SK-N-SH (cell line): ENCODE measurements at regions of chr1 and their contacts with region 1.

Region 1: GRCh38 chr1:6052543-6053205 is 7.0 kb downstream of the KCNAB2 start:
- DNase-seq: peak; percentile 86
- H3K4me3 ChIP-seq: peak overlapping the region in 1 of 2 experiments; percentile 36; a peak in 1 of 4 replicates
- H3K27ac ChIP-seq: no peak overlapping the region
- H3K4me1 ChIP-seq: peaks cover 0 to 38% of the 10 kb centered on the region in 2 experiments; a peak in 1 of 4 replicates
- H3K27me3 ChIP-seq: no peaks in the 10 kb centered on the region
- CTCF ChIP-seq: peak; percentile 62
- EP300 ChIP-seq: 0 out of 4 replicates have a peak, but pooled peaks of 1 of the 2 experiments have one; percentile 7
- RAD21 ChIP-seq: peak; percentile 94

Region 2: GRCh38 chr1:6041432-6042062 is 11.1 kb before region 1 on chr1:
- CTCF ChIA-PET with region 1: interaction called, 32 read pairs
- POLR2A ChIA-PET with region 1: no interaction called
- DNase-seq: peak; percentile 83
- H3K4me3 ChIP-seq: peak overlapping the region in 1 of 2 experiments; percentile 37; a peak in 1 of 4 replicates
- H3K27ac ChIP-seq: no peak overlapping the region
- H3K4me1 ChIP-seq: peaks cover 5 to 24% of the 10 kb centered on the region in 2 experiments; a peak in 1 of 4 replicates
- H3K27me3 ChIP-seq: no peaks in the 10 kb centered on the region
- CTCF ChIP-seq: peak; percentile 55
- EP300 ChIP-seq: no peak
- RAD21 ChIP-seq: peak; percentile 70

Region 3: DNA sequence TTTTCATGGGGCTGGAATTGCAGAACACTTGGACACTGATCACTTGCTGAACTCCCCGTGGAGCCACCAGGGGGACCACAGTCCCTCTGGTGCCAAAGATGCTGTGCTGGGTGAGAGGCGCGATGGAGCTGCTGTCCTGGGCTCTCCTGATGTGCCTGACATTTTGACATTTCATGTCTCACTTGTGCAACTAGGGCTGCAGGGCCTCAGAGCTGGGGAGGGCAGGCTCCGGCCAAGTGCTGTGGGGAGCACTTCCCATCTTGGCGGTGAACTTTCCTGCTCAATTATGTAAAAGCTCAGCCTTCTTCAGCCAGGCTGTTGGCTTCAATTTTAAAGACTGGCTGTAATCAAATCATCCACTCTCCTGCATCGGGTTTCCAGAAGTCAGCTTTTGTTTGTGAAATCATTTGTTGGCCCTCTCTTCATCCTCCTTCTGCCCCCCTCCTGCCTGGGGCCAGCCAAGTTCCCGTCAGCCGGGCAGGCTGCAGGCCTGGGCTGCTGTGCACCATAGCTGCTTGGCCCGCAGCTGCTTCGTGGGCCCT is 29.8 kb after region 1 on chr1:
- CTCF ChIA-PET with region 1: interaction called, 47 read pairs
- POLR2A ChIA-PET with region 1: no interaction called
- DNase-seq: peak; percentile 82
- H3K4me3 ChIP-seq: no peak overlapping the region
- H3K27ac ChIP-seq: no peak overlapping the region
- H3K4me1 ChIP-seq: peaks cover 0 to 18% of the 10 kb centered on the region in 2 experiments; a peak in 1 of 4 replicates
- H3K27me3 ChIP-seq: no peaks in the 10 kb centered on the region
- CTCF ChIP-seq: peak; percentile 34
- EP300 ChIP-seq: no peak
- RAD21 ChIP-seq: peak; percentile 62

Region 4: GRCh38 chr1:6162773-6163172 is 110.1 kb after region 1 on chr1:
- CTCF ChIA-PET with region 1: interaction called, 10 read pairs
- POLR2A ChIA-PET with region 1: no interaction called
- DNase-seq: peak; percentile 90
- H3K4me3 ChIP-seq: no peak overlapping the region
- H3K27ac ChIP-seq: peak overlapping the region in 1 of 2 experiments; percentile 55; a peak in 1 of 4 replicates
- H3K4me1 ChIP-seq: peaks cover 0 to 44% of the 10 kb centered on the region in 2 experiments; a peak in 1 of 4 replicates
- H3K27me3 ChIP-seq: no peaks in the 10 kb centered on the region
- CTCF ChIP-seq: no peak
- EP300 ChIP-seq: no peak
- RAD21 ChIP-seq: no peak

Region 5: GRCh38 chr1:6185635-6186382 is 133.1 kb after region 1 on chr1:
- CTCF ChIA-PET with region 1: interaction called, 11 read pairs
- POLR2A ChIA-PET with region 1: interaction called, 3 read pairs
- DNase-seq: peak; percentile 61
- H3K4me3 ChIP-seq: no peak overlapping the region
- H3K27ac ChIP-seq: no peak overlapping the region
- H3K4me1 ChIP-seq: peaks cover 4% of the 10 kb centered on the region in 2 experiments; a peak in 2 of 4 replicates
- H3K27me3 ChIP-seq: no peaks in the 10 kb centered on the region
- CTCF ChIP-seq: peak; percentile 65
- EP300 ChIP-seq: no peak
- RAD21 ChIP-seq: peak; percentile 64

Region 6: DNA sequence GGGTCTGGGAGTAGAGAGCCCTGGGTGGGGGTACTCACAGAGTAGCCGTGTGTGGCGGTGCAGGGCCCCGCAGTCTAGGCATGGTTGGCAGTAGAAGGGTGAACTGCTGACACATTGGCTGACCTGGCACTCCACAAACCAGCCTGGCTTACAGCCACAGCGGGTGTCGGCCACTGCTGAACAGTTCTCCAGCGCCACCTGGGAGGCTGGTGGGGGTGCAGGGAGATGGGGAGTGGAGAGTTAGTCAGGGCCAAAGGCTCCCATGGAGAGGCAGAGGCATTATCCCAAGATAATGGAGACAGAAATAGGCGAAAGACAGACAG is 411.8 kb after region 1 on chr1:
- CTCF ChIA-PET with region 1: no interaction called
- POLR2A ChIA-PET with region 1: no interaction called
- DNase-seq: no peak
- H3K4me3 ChIP-seq: no peak overlapping the region
- H3K27ac ChIP-seq: no peak overlapping the region
- H3K4me1 ChIP-seq: no peaks in the 10 kb centered on the region
- H3K27me3 ChIP-seq: no peaks in the 10 kb centered on the region
- CTCF ChIP-seq: no peak
- EP300 ChIP-seq: no peak
- RAD21 ChIP-seq: no peak